ENCODE measurements at regions of chr14 and their contacts with region 1.

Region 1: GRCh38 chr14:44961604-44962333 is at the starts of genes KLHL28 and TOGARAM1:
- DNase-seq: peak; percentile 96 to 99 (median 97)
- H3K4me3 ChIP-seq: peak within 1 kb of the TSS; percentile 90
- H3K27ac ChIP-seq: peak within 1 kb of the TSS; percentile 51 to 88
- H3K4me1 ChIP-seq: peaks cover 8% of the 10 kb centered on the region
- H3K27me3 ChIP-seq: no peaks in the 10 kb centered on the region
- CTCF ChIP-seq: no peak
- EP300 ChIP-seq: peak; percentile 37
- POLR2A ChIP-seq: peak; percentile 79
- total RNA-seq, gene KLHL28: 9.3 to 16.4 (median 15.6) TPM
- total RNA-seq, gene TOGARAM1: 17.8 to 28.3 (median 21.8) TPM

Region 2: GRCh38 chr14:44778604-44779003 is 183.2 kb before region 1 on chr14:
- intact Hi-C with region 1: no loop called
- DNase-seq: no peak
- H3K4me3 ChIP-seq: no peak overlapping the region
- H3K27ac ChIP-seq: no peak overlapping the region
- H3K4me1 ChIP-seq: no peaks in the 10 kb centered on the region
- H3K27me3 ChIP-seq: no peaks in the 10 kb centered on the region
- CTCF ChIP-seq: no peak
- EP300 ChIP-seq: no peak
- POLR2A ChIP-seq: no peak

Region 3: GRCh38 chr14:45083971-45084722 is 122.4 kb after region 1 on chr14 and contains the start of gene PRPF39:
- intact Hi-C with region 1: loop called in 1 of 4 experiments (anchors 2 kb)
- DNase-seq: peak; percentile 92 to 95 (median 94)
- H3K4me3 ChIP-seq: peak within 1 kb of the TSS; percentile 72
- H3K27ac ChIP-seq: peak within 1 kb of the TSS; percentile 41 to 59
- H3K4me1 ChIP-seq: peaks cover 3% of the 10 kb centered on the region
- H3K27me3 ChIP-seq: no peaks in the 10 kb centered on the region
- CTCF ChIP-seq: no peak
- EP300 ChIP-seq: no peak
- POLR2A ChIP-seq: peak; percentile 86
- total RNA-seq, gene PRPF39: 24.9 to 50.5 (median 41.1) TPM

Region 4: GRCh38 chr14:45135659-45136314 is 174.0 kb after region 1 on chr14 and contains the start of gene FANCM:
- intact Hi-C with region 1: loop called in 1 of 4 experiments (anchors 5 kb)
- DNase-seq: peak; percentile 89 to 95 (median 91)
- H3K4me3 ChIP-seq: peak within 1 kb of the TSS; percentile 64
- H3K27ac ChIP-seq: peak within 1 kb of the TSS in 1 of 2 donors; percentile 81
- H3K4me1 ChIP-seq: no peaks in the 10 kb centered on the region
- H3K27me3 ChIP-seq: no peaks in the 10 kb centered on the region
- CTCF ChIP-seq: no peak
- EP300 ChIP-seq: no peak
- POLR2A ChIP-seq: no peak
- total RNA-seq, gene FANCM: 4.4 to 9.1 (median 6.2) TPM

Region 5: GRCh38 chr14:45238988-45239387 is 277.2 kb after region 1 on chr14:
- intact Hi-C with region 1: no loop called
- DNase-seq: no peak
- H3K4me3 ChIP-seq: no peak overlapping the region
- H3K27ac ChIP-seq: no peak overlapping the region
- H3K4me1 ChIP-seq: peaks cover 1% of the 10 kb centered on the region
- H3K27me3 ChIP-seq: no peaks in the 10 kb centered on the region
- CTCF ChIP-seq: no peak
- EP300 ChIP-seq: no peak
- POLR2A ChIP-seq: no peak

Measured in ovary (tissue), 10 donors.